H1 (cell line): ENCODE measurements at regions of chr19 and their contacts with region 1.

Region 1: DNA sequence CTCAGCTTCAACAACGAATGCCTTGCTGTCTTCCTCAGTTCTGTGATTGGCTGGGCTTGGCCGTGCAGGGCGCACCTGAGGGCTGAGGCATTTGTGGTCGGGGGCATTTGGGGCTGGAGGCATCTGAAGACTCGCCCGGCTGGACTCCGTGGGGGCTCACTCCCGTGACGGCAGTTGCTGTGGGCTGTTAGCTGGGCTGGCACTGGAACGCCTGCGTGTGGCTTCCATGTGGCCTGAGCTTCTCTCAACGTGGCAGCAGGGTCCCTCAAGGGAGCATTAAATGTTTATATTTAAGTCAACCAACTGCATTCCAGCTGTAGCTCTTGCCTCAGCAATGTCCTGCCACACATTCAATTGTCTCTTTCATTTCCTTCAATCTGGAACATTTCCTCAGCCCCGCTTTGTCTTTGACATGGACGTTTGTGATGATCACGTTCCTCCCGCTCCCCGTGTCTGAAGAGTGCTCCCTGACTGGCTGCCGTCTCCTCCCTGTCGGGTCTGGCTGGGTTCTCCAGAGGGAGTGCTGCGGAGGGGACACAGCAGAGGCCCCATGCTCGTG is 21.0 kb downstream of the CCDC8 start:
- DNase-seq: no peak
- H3K4me3 ChIP-seq: no peak overlapping the region
- H3K27ac ChIP-seq: no peak overlapping the region; the same call in 1 of the 2 replicates
- H3K4me1 ChIP-seq: no peaks in the 10 kb centered on the region; a peak in 2 of 7 replicates
- H3K27me3 ChIP-seq: no peaks in the 10 kb centered on the region
- CTCF ChIP-seq: no peak
- EP300 ChIP-seq: no peak
- POLR2A ChIP-seq: no peak
- RAD21 ChIP-seq: no peak

Region 2: DNA sequence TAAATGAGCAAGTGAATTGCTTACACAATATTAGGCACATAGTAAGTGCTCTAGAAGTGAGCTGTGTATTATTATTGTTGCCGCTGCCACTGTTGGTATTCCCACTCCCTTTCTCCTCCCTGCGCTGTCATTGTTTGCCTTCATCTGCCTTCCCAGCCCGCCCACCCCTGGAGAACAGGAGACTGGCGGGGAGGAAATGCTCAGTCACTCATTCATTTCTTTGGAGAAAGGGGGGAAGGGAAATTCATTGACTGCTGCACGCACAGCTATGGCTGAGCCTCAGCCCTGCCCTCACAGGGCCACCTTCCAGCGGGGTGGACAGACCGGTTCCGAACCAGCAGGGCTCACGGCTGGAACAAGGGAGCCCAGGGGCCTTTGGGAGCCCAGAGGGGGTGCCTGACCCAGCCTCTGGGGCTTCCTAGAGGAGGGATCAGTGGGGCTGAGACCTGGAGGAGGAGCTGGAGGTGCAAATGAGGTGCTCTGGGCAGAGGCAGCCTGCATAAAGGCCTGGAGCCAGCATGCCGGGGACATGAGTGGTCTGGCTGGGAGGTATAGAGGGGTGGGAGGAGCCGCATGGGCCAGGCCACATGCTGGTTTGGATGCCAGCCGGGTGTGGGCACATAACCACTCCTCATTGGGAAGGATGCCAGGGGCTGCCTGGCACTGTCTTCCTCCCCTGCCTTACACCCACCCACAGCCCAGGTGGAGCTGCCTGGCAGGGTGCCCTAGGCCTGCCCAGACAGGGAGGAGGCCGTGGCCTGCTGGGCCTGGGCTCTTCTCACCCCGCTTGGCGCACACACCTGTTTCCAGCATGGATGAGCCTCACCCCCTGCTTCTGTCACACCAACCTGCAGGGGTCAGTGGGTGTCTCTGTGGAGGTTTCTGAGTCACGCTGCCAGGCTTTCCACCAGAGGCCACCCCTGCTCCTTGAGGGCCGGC is 18.6 kb before region 1 on chr19:
- CTCF ChIA-PET with region 1: interaction called, 19 read pairs
- POLR2A ChIA-PET with region 1: interaction called, 15 read pairs
- DNase-seq: peak; percentile 62 to 73
- H3K4me3 ChIP-seq: peak overlapping the region in 3 of 4 experiments; percentile 5 to 42 (median 19); a peak in 5 of 8 replicates
- H3K27ac ChIP-seq: peak overlapping the region; percentile 84
- H3K4me1 ChIP-seq: peaks cover 14 to 30% (median 21%) of the 10 kb centered on the region in 4 experiments
- H3K27me3 ChIP-seq: no peaks in the 10 kb centered on the region
- CTCF ChIP-seq: peak in 1 of 3 experiments; percentile 17; a peak in 1 of 4 replicates
- EP300 ChIP-seq: no peak
- POLR2A ChIP-seq: peak in 1 of 2 experiments; percentile 51; a peak in 1 of 3 replicates
- RAD21 ChIP-seq: no peak

Region 3: DNA sequence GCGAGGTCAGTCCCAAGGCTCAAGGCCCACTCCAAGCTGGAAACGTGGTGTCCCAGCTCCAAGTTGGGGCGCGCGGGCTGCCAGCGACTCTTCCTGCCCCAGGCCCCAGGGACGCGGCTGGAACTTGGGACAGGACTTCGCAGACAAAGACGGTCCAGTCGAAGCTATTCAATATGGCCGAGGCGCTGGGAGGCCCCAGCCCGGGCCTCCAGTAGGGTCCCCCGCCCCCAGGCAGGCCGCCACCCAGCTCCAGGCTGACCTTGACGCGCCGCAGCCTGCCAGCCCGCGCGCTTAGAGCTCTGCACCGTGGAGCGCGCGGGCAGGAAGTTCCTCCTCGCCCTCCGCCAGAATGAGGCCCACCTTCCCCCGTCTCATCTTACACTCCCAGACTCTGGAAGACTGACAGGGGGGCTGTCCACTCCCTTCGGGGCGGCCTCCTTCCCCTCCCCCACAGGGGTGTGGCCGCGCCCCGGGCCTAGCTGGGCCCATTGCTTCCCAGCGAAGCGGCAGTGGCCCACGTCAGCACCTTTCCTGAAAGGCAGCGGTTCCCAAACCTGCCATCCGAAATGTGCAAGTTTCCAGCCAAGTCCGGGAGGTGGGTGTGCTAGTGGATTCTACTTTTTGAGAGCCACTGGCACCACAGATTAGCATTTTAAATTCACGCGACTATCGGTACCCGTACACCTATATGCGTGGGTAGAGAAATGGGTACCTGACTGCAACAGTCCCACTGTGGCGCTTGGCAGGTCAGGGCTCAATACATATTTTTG is 21.1 kb after region 1 on chr19 and contains the start of gene CCDC8:
- CTCF ChIA-PET with region 1: interaction called, 15 read pairs
- POLR2A ChIA-PET with region 1: interaction called, 7 read pairs
- DNase-seq: peak; percentile 86 to 91
- H3K4me3 ChIP-seq: peak within 1 kb of the TSS; percentile 57 to 88 (median 74)
- H3K27ac ChIP-seq: peak within 1 kb of the TSS; percentile 13; the same call in 1 of the 2 replicates
- H3K4me1 ChIP-seq: peaks cover 3 to 13% (median 10%) of the 10 kb centered on the region in 4 experiments
- H3K27me3 ChIP-seq: peaks cover 0 to 16% (median 7%) of the 10 kb centered on the region in 4 experiments; a peak in 4 of 7 replicates
- CTCF ChIP-seq: no peak
- EP300 ChIP-seq: no peak
- POLR2A ChIP-seq: peak in 1 of 2 experiments; percentile 73; a peak in 2 of 3 replicates
- RAD21 ChIP-seq: no peak
- total RNA-seq, gene CCDC8: 13.6 and 15.1 TPM in 2 replicates

Region 4: GRCh38 chr19:46482631-46483030 is 90.3 kb after region 1 on chr19:
- CTCF ChIA-PET with region 1: interaction called, 254 read pairs
- POLR2A ChIA-PET with region 1: interaction called, 6 read pairs
- DNase-seq: no peak
- H3K4me3 ChIP-seq: no peak overlapping the region
- H3K27ac ChIP-seq: no peak overlapping the region
- H3K4me1 ChIP-seq: peaks cover 0 to 12% (median 5%) of the 10 kb centered on the region in 4 experiments; a peak in 4 of 7 replicates
- H3K27me3 ChIP-seq: peaks cover 0 to 12% (median 4%) of the 10 kb centered on the region in 4 experiments; a peak in 6 of 7 replicates
- CTCF ChIP-seq: no peak
- EP300 ChIP-seq: no peak
- POLR2A ChIP-seq: no peak
- RAD21 ChIP-seq: no peak

Region 5: DNA sequence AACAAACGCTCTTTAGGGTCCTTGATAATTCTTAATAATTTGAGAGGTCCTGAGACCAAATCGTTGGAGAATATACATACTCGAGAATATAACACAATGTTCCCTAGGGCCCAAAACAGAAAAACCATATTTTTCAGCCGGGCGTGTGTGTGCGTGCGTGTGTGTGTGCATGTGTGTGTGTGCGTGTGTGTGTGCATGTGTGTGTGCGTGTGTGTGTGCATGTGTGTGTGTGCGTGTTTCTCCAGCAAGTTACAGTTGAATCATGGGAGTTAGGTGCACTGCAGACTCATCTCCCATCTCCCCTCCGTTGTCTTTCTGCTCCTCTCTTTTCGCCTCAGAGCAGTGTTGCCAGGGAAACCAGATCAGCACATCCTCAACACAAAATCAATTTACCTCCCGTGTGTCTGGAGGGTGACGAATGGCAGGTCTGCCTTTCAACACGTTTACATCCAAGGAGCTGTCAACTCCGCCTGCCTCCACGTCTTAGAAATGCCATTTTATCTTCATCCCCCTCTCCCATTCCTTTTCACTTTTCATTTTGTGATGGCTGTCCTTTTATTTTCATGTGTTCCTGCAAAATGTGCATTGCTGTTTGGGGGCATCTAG is 111.6 kb after region 1 on chr19:
- CTCF ChIA-PET with region 1: interaction called, 14 read pairs
- POLR2A ChIA-PET with region 1: no interaction called
- DNase-seq: no peak
- H3K4me3 ChIP-seq: no peak overlapping the region
- H3K27ac ChIP-seq: no peak overlapping the region
- H3K4me1 ChIP-seq: no peaks in the 10 kb centered on the region
- H3K27me3 ChIP-seq: no peaks in the 10 kb centered on the region
- CTCF ChIP-seq: no peak
- EP300 ChIP-seq: no peak
- POLR2A ChIP-seq: no peak
- RAD21 ChIP-seq: no peak